ENCODE measurements at regions of chr17 and their contacts with region 1.

Region 1: GRCh38 chr17:68435876-68436842 is 21.1 kb downstream of the WIPI1 start:
- DNase-seq: peak; percentile 78 to 82
- ATAC-seq: peak; percentile 82 to 91
- H3K4me3 ChIP-seq: no peak overlapping the region
- H3K27ac ChIP-seq: no peak overlapping the region
- H3K4me1 ChIP-seq: 0 out of 3 replicates have a peak, but pooled peaks cover 3% of the 10 kb centered on the region
- CTCF ChIP-seq: peak; percentile 91
- EP300 ChIP-seq: no peak
- POLR2A ChIP-seq: no peak
- RAD21 ChIP-seq: peak; percentile 85 to 95

Region 2: GRCh38 chr17:68184816-68185436 is 251.2 kb before region 1 on chr17:
- CTCF ChIA-PET with region 1: no interaction called
- POLR2A ChIA-PET with region 1: interaction called, 10 read pairs
- DNase-seq: no peak
- ATAC-seq: no peak
- H3K4me3 ChIP-seq: no peak overlapping the region
- H3K27ac ChIP-seq: no peak overlapping the region
- H3K4me1 ChIP-seq: no peaks in the 10 kb centered on the region
- CTCF ChIP-seq: no peak
- EP300 ChIP-seq: no peak
- POLR2A ChIP-seq: no peak
- RAD21 ChIP-seq: no peak

Region 3: DNA sequence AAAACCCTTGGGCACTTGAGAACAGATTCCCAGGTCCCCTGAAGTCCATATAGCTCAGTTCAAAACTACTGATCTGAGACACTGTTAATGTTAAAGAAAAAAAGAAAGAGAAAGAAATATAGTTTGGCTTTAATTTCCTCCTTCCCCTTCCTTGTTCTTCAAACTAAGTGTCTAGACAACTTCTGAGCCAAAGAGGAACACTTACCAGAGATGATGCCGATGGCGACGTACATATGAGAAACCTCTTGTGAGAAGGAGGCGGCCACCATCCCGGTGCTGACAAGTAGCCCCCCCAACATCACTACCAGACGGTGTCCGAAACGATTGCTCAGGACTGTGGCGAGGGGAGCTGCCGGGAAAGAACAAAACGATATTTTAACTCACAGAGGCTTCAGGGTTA is 162.4 kb before region 1 on chr17:
- CTCF ChIA-PET with region 1: interaction called, 12 read pairs
- POLR2A ChIA-PET with region 1: no interaction called
- DNase-seq: no peak
- ATAC-seq: no peak
- H3K4me3 ChIP-seq: no peak overlapping the region
- H3K27ac ChIP-seq: no peak overlapping the region
- H3K4me1 ChIP-seq: no peaks in the 10 kb centered on the region
- CTCF ChIP-seq: no peak
- EP300 ChIP-seq: no peak
- POLR2A ChIP-seq: no peak
- RAD21 ChIP-seq: no peak

Region 4: DNA sequence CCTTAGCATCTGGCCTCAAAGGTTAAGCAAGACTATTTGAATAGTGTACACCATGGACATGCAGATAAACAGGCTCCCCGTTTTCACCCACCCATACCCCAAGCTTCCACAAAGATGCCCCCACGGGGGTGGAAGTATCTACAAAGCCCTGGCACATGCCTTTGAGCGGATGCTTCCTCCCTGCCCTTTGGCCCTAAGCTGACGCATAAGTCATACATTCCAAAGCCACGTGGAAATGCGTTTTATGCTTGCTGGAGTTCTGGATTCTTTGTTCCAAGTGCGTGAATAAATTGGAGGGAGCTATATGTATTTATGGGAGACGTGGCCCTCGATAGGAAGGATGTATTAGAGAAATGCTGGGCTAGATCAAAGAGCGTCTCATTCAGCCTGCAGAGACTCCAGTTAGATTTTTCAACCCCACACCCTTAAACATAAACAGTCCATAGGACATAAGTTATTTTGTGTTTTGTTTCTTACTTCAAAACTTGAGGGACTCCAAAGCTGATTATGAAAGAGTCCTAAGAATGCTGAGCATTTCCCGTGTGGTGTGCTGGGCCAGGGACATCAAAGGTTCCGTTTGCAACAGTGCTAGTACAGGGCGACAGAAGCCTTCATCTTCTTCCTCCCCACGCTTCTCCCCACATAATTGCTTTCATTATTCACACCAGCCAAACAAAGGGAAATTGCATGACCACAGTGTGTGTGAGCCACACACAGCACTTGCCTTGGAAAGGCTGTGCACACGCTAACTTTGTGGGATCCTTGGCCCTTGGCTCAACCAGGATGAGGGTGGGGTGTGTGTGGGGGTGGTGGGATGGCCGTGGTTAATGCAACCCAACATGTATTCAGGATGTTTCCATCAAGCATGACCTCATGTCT is 52.5 kb before region 1 on chr17:
- CTCF ChIA-PET with region 1: interaction called, 10 read pairs
- POLR2A ChIA-PET with region 1: no interaction called
- DNase-seq: peak in 1 of 2 experiments; percentile 50
- ATAC-seq: peak in 1 of 2 experiments; percentile 5; a peak in 2 of 6 replicates
- H3K4me3 ChIP-seq: no peak overlapping the region
- H3K27ac ChIP-seq: peak overlapping the region; percentile 38 to 50; a peak in 4 of 6 replicates
- H3K4me1 ChIP-seq: peaks cover 47% of the 10 kb centered on the region
- CTCF ChIP-seq: no peak
- EP300 ChIP-seq: no peak
- POLR2A ChIP-seq: no peak
- RAD21 ChIP-seq: no peak

Region 5: DNA sequence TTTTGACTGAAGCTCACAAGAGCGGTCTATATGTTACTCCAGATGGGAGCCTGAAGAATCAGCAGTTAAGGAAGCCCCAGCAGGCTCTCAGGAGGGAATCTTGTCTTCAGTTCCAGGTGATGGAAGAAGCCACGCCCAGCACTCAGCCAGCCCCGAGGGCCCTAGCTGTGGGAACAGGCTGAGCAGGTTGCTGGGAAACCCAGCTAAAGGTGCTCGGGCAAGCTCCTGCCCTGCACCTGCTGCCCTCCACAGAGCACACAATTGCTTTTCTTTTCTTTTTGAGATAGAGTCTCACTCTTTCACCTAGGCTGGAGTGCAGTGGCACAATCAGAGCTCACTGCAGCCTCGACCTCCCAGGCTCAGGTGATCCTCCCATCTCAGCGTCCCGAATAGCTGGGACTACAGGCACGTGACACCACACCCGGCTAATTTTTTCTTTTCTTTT is 11.2 kb before region 1 on chr17:
- CTCF ChIA-PET with region 1: interaction called, 18 read pairs
- POLR2A ChIA-PET with region 1: no interaction called
- DNase-seq: no peak
- ATAC-seq: no peak
- H3K4me3 ChIP-seq: no peak overlapping the region
- H3K27ac ChIP-seq: no peak overlapping the region
- H3K4me1 ChIP-seq: no peaks in the 10 kb centered on the region
- CTCF ChIP-seq: no peak
- EP300 ChIP-seq: no peak
- POLR2A ChIP-seq: no peak
- RAD21 ChIP-seq: no peak

Region 6: DNA sequence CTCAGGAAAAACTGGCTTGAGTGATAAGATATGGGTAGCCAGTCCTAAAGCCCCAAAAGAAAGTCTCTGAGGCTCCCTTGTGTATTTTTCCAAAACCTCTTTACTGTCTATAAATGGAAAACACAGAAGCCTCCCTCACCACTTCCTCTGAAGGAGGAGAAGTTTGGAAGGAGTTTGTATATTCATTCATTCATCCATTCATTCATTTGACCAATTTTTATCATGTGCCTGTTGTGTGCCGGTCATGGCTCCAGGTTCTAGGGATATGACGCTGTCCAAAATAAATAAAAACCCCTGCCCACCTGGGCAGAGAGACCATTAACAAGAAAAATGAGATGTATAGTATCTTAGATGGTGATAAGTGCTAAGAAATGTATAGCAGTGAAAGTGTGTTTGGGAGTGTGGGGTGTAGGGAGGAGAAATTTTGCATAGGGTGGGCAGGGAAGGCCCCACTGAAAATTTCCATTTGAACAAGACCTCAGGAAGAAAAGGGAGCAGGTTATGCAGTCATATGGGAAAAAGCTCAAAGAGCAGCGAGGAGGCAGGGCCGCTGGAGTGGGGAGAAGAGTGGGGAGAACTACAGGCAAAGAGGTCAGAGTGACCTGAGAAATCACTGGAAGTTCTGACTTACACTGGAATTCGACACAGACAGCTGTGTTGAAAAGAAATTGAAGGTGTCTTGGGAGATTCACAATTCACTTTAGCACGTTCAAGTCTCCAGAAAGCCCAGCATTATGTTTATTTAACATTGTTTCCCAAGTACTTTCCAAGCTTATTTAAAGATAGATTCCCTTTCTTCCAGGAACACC is 27.3 kb after region 1 on chr17:
- CTCF ChIA-PET with region 1: interaction called, 115 read pairs
- POLR2A ChIA-PET with region 1: no interaction called
- DNase-seq: no peak
- ATAC-seq: no peak; a peak in 1 of 6 replicates
- H3K4me3 ChIP-seq: no peak overlapping the region
- H3K27ac ChIP-seq: no peak overlapping the region
- H3K4me1 ChIP-seq: peaks cover 7% of the 10 kb centered on the region; the same call in 2 of the 3 replicates
- CTCF ChIP-seq: no peak; the same call in 2 of the 3 replicates
- EP300 ChIP-seq: no peak
- POLR2A ChIP-seq: no peak
- RAD21 ChIP-seq: no peak